ENCODE measurements at regions of chr1 and their contacts with region 1.

Region 1: DNA sequence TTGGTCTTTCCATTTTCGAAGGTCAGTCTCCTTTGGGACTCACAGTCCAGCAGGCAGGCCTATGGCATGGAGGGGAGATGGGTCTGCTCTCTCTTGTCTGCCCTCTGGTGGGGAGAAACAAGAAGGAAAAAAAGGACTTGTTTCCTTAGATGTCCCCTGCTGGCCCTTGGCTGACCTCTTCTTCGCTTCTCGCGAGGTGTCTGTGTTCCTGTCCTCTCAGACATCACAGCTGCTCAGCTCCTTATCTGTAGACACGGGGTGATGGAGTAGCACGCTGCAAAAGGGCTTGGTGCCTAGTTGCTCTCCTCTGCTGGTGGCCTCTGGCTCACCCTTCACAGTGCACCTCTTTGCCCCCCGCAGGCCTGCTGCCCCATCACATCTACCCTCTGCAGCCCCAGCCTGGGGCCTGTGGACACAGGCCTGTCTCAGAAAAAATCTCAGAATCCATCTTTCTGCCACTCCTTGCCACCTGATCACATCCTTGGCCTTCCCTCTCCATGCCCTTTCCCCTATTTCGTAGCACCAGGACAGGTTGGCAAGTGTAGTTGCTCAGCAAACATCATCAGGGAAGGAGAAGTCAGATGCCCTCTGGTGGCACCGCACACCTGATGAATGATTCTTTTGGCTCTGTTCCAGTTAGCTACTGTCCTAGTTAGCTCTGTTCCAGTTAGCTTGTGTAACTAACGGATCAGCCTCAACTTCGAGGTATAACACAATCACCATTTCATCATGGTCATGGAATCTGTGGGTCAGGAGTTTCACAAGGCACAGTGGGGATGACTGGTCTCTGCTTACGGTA is 18.7 kb upstream of the AK2 start:
- DNase-seq: peak; percentile 68 to 75
- H3K4me3 ChIP-seq: no peak overlapping the region
- H3K27ac ChIP-seq: peak overlapping the region in 1 of 3 donors; percentile 23
- H3K4me1 ChIP-seq: peaks cover 4 to 15% of the 10 kb centered on the region in 2 donors
- H3K27me3 ChIP-seq: no peaks in the 10 kb centered on the region
- CTCF ChIP-seq: peak; percentile 40 to 89 (median 72)
- POLR2A ChIP-seq: no peak

Region 2: GRCh38 chr1:32933742-32934322 is 121.6 kb before region 1 on chr1:
- intact Hi-C with region 1: loop called (anchors 5 kb)
- DNase-seq: no peak
- H3K4me3 ChIP-seq: no peak overlapping the region
- H3K27ac ChIP-seq: peak overlapping the region in 2 of 3 donors; percentile 32 to 57
- H3K4me1 ChIP-seq: peaks cover 0 to 5% of the 10 kb centered on the region in 2 donors
- H3K27me3 ChIP-seq: no peaks in the 10 kb centered on the region
- CTCF ChIP-seq: peak in 2 of 6 experiments; percentile 4 to 14
- POLR2A ChIP-seq: no peak

Measured in thyroid gland (tissue), 4 donors.